ENCODE measurements at regions of chr16 and their contacts with region 1.

Region 1: DNA sequence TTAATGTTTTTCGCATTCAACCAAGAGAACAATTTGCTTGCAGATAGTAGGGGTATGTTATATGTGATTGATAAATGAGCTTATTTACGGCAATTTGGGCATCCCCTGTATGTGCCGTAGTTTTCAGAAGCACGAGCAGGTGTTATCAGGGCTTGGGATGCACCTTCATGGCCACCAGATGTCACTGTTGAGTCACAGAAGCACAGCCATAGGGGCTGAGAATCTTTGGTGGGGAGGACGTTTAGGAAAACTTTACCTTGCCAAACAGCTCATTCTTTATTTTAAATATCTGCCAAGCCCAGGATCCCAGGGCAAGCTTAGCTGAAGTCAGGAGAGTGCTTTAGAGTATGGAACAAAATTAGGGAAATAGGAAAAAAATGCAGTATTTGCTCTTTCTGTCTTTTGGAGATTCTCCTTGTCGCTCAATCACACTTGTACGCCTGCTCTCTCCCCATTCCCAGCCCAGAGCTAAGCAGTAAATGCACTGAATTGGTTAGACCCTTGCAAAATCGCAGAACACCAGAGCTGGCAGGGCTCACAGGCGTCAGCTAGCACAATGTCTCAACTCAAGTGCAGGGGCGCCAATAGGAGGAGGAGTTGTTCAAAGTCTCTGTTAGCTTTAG is 93.6 kb upstream of the MPHOSPH6 start:
- DNase-seq: no peak
- ATAC-seq: peak; percentile 60
- H3K4me3 Mint-ChIP-seq: no peak overlapping the region
- H3K27ac Mint-ChIP-seq: no peak overlapping the region
- H3K4me1 Mint-ChIP-seq: no peaks in the 10 kb centered on the region
- H3K27me3 Mint-ChIP-seq: peaks cover 8% of the 10 kb centered on the region
- CTCF ChIP-seq: no peak

Region 2: GRCh38 chr16:83447560-83447959 is 1183.9 kb after region 1 on chr16:
- CTCF ChIA-PET with region 1: interaction called, 19 read pairs
- POLR2A ChIA-PET with region 1: no interaction called
- intact Hi-C with region 1: no loop called
- DNase-seq: no peak
- ATAC-seq: no peak
- H3K4me3 Mint-ChIP-seq: no peak overlapping the region
- H3K27ac Mint-ChIP-seq: no peak overlapping the region
- H3K4me1 Mint-ChIP-seq: no peaks in the 10 kb centered on the region
- H3K27me3 Mint-ChIP-seq: no peaks in the 10 kb centered on the region
- CTCF ChIP-seq: no peak

Measured in activated B cell treated with CpG ODN at 0.5 μM for 24 hours (primary cell).